Activated CD4-positive, alpha-beta T cell treated with anti-CD3 and anti-CD28 coated beads for 36 hours (primary cell): ENCODE measurements at regions of chr20 and their contacts with region 1.

Region 1: DNA sequence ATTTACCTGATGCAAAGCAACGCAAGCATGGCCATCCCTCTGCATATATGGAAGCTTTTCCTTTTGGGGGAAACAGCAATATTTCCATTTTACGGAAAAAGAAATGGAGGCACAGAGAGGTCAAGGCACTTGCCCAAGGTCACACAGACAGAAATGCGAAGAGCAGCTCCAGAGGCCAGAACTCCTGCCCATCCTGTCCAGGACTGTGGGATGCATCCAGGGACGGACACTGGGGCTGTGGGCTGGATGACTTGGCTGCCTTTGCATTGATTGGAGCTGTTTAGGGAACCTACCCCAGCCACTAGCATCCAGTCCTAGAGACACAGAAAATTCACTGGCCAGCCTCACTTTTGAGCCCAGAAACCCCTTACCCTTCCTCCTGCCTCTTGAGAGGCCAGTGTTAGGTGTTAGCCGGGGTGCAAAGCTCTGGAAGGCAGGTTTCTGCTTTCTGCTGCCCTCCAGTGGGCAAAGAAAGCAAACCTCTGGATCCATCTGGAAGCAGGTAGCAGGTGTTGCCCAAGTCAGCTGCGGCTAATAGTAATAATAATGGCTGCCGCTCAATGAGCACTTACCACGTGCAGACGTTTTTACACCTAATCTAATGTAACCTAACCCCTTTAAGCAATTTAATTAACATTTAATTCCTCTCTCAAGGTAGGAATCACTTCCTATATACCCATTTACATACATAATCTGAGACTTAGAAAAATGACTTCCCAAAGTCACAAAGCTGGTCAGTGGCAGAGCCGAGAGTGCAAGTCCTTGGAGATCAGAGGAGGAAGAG is 31.7 kb upstream of the CCN5 start:
- DNase-seq: peak; percentile 69
- ATAC-seq: peak; percentile 79
- H3K4me3 Mint-ChIP-seq: no peak overlapping the region
- H3K27ac Mint-ChIP-seq: no peak overlapping the region
- H3K4me1 Mint-ChIP-seq: no peaks in the 10 kb centered on the region
- H3K27me3 Mint-ChIP-seq: no peaks in the 10 kb centered on the region

Region 2: DNA sequence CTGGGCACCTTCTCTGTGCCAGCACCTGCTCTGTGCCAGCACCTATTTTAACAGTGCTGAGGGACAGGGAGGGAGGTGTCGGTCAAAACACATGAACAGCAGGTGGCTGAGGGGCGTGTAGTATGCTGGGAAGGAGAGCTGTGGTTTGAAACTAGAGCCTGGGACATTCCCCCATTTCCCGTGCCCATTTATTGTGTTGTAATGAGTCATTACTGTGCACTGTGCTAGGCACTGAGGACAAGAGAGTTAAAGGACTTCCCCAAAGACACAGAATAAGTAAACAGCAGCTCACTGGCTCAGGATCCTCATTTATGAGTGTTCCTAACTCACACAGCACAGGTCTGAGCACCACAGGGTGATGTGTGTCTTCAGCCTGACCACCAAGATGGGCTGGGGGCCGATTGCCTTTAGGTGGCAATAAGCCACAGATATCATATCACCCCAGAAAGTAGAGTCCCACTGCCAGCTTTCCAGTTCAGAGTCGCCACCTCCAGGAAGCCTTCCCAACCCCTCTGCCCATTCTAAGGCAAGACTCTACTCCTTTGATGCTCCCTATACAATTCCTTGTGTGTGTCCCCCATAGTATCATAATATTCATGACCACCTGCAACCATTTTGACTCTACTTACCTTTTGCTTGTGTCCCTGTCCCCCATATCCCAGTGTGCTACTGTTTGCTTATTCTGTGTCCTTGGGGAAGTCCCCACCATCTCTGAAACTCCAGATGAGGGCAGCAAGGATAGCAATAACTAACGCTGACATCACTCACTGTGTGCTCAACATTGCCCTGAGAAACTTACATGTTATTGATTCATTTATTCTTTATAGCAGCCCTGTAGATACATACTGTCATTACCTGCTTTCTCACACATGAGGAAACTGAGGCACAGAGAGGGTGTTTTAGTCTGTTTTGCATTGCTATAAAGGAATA is 681.5 kb before region 1 on chr20:
- CTCF ChIA-PET with region 1: no interaction called
- POLR2A ChIA-PET with region 1: no interaction called
- intact Hi-C with region 1: no loop called
- DNase-seq: peak; percentile 55
- ATAC-seq: peak; percentile 84
- H3K4me3 Mint-ChIP-seq: no peak overlapping the region
- H3K27ac Mint-ChIP-seq: peak overlapping the region; percentile 4
- H3K4me1 Mint-ChIP-seq: peaks cover 21% of the 10 kb centered on the region
- H3K27me3 Mint-ChIP-seq: peaks cover 13% of the 10 kb centered on the region

Region 3: GRCh38 chr20:44651684-44652423 is 31.6 kb before region 1 on chr20 and contains the start of gene ADA:
- CTCF ChIA-PET with region 1: interaction called, 20 read pairs
- POLR2A ChIA-PET with region 1: no interaction called
- intact Hi-C with region 1: no loop called
- DNase-seq: peak; percentile 65
- ATAC-seq: peak; percentile 48
- H3K4me3 Mint-ChIP-seq: peak within 1 kb of the TSS; percentile 78
- H3K27ac Mint-ChIP-seq: peak within 1 kb of the TSS; percentile 89
- H3K4me1 Mint-ChIP-seq: peaks cover 50% of the 10 kb centered on the region
- H3K27me3 Mint-ChIP-seq: no peaks in the 10 kb centered on the region
- total RNA-seq, gene ADA: 33.8 to 37.8 TPM

Region 4: GRCh38 chr20:44666066-44666465 is 17.4 kb before region 1 on chr20:
- CTCF ChIA-PET with region 1: interaction called, 21 read pairs
- POLR2A ChIA-PET with region 1: no interaction called
- intact Hi-C with region 1: no loop called
- DNase-seq: no peak
- ATAC-seq: no peak
- H3K4me3 Mint-ChIP-seq: no peak overlapping the region
- H3K27ac Mint-ChIP-seq: no peak overlapping the region
- H3K4me1 Mint-ChIP-seq: peaks cover 17% of the 10 kb centered on the region
- H3K27me3 Mint-ChIP-seq: no peaks in the 10 kb centered on the region

Region 5: DNA sequence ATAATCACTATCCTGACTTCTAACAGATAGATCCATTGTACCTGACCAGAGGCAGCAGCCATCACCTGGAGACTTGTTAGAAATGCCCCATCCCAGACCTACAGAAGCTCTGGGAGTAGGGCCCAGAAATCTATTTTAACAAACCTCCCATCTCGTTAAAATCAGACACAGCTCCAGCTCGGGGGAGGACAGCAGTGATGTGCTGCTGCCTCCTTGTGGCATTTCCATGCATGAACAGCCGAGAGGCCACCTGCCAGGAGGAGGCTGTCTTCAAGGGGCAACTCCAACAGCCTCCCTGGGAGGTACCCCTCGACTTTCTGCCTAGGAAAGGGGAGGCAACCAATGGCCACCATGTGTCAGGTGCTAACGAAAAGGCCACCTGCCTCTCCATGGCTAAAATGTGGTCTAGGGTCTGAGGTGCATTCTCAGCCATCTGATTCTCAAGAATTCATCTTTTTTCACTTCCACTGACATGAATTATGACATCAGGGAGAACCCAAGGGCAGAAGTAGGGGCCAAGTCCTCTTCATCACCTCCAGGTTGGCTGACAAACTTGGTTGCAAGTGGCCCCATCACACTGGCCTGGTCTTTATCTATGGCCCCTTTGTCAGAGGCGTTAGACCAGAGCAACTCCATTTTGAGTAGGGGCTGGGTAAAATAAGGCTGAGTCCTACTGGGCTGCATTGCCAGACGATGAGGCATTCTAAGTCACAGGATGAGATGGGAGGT is 50.0 kb after region 1 on chr20:
- CTCF ChIA-PET with region 1: interaction called, 61 read pairs
- POLR2A ChIA-PET with region 1: no interaction called
- intact Hi-C with region 1: loop called (anchors 1 kb)
- DNase-seq: peak; percentile 82
- ATAC-seq: peak; percentile 64
- H3K4me3 Mint-ChIP-seq: no peak overlapping the region
- H3K27ac Mint-ChIP-seq: no peak overlapping the region
- H3K4me1 Mint-ChIP-seq: peaks cover 26% of the 10 kb centered on the region
- H3K27me3 Mint-ChIP-seq: no peaks in the 10 kb centered on the region

Region 6: DNA sequence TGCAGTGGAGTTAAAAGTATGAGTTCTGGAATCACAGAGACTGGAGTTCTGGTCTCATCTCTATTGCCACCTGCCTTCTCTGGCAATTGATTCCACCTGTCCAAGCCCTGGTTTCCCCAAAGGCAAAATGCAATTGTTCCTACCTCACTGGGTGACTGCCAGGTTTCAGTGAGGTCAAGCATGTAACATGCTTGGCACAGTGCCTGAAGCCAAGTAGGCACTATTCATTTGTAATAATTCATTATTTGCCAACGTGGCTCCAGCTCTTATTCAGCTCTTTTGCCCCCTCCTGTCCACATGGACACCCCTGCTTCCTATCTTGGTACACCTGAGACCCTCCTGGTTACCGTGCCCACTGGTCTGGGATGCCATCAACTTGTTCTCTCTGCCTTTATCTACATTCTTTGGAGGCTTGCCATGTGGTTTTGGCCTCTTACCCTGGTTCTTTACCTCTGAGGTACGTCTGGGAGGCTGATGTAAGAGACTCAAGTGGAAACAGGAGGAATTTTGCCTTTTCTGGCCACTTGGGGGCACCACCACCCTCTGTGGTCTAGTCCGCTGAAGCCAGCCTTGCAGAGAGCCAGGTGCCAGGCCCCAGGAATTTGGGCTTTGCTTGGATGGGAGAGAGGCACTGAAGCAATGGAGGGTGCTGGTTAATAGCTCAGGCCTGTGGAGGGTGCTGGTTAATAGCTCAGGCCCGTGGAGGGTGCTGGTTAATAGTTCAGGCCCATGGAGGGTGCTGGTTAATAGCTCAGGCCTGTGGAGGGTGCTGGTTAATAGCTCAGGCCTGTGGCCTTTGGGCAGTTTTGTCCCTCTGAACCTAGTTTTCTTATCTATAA is 63.9 kb after region 1 on chr20:
- CTCF ChIA-PET with region 1: interaction called, 6 read pairs
- POLR2A ChIA-PET with region 1: no interaction called
- intact Hi-C with region 1: loop called in 1 of 2 experiments (anchors 1 kb)
- DNase-seq: peak; percentile 87
- ATAC-seq: peak; percentile 60
- H3K4me3 Mint-ChIP-seq: peak overlapping the region; percentile 76
- H3K27ac Mint-ChIP-seq: peak overlapping the region; percentile 84
- H3K4me1 Mint-ChIP-seq: peaks cover 19% of the 10 kb centered on the region
- H3K27me3 Mint-ChIP-seq: peaks cover 21% of the 10 kb centered on the region

Region 7: DNA sequence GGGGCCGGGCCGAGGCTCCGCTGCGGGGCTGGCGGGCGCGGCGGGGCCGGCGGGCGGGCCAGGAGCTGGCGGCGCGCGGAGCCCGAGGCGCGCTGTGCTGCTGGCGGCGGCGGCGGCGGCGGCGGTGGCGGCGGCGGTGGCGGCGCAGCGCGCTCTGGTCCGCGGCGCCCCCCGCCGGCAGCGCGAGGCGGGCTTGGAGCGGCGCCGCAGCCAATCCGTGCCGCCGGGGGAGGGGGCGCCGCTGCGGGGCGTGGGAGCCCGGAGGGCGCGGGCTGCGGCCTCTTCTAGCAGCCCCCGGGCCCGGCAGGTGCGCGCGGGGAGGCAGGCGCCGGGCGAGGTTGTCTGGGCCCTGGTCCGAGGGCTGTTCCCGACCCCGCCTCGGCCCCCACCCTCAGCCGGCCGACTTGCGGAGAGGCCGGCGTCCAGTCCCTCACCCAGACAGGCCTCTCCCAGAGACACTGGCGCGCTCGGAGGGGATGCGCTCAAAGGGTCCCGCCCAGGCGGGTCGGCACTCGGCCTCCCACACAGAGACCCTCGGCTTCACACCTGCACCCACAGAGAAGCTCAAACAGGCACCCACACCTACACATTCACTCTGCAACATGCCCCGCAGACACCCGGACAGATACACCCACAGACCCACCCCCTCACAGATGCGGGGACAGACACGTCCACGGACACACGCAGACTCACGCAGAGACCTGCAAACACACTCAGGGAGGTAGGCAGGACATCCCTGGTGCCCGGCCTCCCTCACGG is 127.1 kb after region 1 on chr20 and contains the start of gene RIMS4:
- CTCF ChIA-PET with region 1: no interaction called
- POLR2A ChIA-PET with region 1: no interaction called
- intact Hi-C with region 1: loop called in 1 of 2 experiments (anchors 5 kb)
- DNase-seq: peak; percentile 25
- ATAC-seq: peak; percentile 76
- H3K4me3 Mint-ChIP-seq: peak within 1 kb of the TSS; percentile 28
- H3K27ac Mint-ChIP-seq: no peak within 1 kb of the TSS
- H3K4me1 Mint-ChIP-seq: peaks cover 3% of the 10 kb centered on the region
- H3K27me3 Mint-ChIP-seq: peaks cover 48% of the 10 kb centered on the region
- total RNA-seq, gene RIMS4: not detected

Region 8: DNA sequence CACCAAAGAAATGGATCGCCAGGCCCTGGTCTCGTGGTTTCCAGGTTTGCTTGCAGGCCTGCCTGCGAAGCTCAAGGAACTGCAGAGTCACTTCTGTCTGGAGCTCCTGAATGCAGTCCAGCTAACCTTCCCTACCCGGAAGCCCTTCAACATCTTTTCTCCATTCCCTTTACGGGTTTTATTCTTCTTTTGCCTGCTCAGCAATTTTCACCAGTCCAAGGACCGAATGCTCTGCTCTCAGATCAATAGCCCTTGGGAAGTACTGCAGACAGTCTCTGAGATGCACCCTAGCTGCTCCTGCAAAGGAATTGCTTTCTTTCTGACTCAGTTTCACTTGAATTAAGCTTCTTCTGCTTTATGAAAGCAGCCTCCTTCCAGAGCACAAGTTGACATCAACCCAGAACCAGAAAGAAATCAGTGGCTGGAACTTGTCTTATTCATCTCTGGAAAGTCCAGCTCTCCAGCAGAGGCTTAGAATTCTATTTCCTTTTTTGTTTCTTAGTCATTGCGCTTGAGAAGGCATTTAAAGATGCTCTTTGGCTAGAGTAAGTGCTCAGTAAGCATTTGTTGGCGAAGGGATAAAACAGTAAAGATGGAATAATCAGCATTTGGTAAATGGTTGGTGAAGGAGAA is 183.4 kb after region 1 on chr20:
- CTCF ChIA-PET with region 1: interaction called, 10 read pairs
- POLR2A ChIA-PET with region 1: no interaction called
- intact Hi-C with region 1: loop called (anchors 1 kb)
- DNase-seq: no peak
- ATAC-seq: peak; percentile 23
- H3K4me3 Mint-ChIP-seq: peak overlapping the region; percentile 57
- H3K27ac Mint-ChIP-seq: no peak overlapping the region
- H3K4me1 Mint-ChIP-seq: peaks cover 13% of the 10 kb centered on the region
- H3K27me3 Mint-ChIP-seq: peaks cover 7% of the 10 kb centered on the region